ENCODE measurements at regions of chr9 and their contacts with region 1.

Region 1: DNA sequence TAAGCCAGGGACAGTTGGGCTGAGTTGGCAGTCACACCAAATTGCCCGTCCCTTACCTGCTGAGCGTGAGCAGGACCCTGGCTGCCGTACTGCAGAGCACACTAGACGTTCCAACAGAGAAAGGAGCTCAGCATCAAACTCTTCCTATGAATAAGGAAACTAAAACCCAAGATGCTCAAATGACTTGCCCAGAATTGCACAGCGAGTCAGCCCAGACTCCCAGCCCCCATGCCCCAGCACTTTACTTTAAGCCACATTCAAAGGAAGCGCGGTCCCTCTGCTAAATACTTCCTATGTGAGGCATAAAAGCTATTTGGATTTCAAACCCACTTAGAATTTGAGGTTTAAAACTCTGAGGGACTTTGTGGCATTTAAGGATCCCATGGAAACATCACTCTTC is 23.9 kb downstream of the PAX5 start:
- DNase-seq: no peak
- ATAC-seq: no peak
- H3K4me3 ChIP-seq: no peak overlapping the region
- H3K27ac ChIP-seq: no peak overlapping the region
- H3K4me1 ChIP-seq: no peaks in the 10 kb centered on the region
- H3K27me3 ChIP-seq: peaks cover 79% of the 10 kb centered on the region
- CTCF ChIP-seq: no peak
- POLR2A ChIP-seq: no peak
- RAD21 ChIP-seq: no peak

Region 2: GRCh38 chr9:36392489-36392888 is 617.7 kb before region 1 on chr9:
- CTCF ChIA-PET with region 1: no interaction called
- POLR2A ChIA-PET with region 1: no interaction called
- RAD21 ChIA-PET with region 1: no interaction called
- intact Hi-C with region 1: no loop called
- DNase-seq: no peak
- ATAC-seq: no peak
- H3K4me3 ChIP-seq: no peak overlapping the region
- H3K27ac ChIP-seq: no peak overlapping the region
- H3K4me1 ChIP-seq: peaks cover 0 to 6% of the 10 kb centered on the region in 2 experiments; a peak in 2 of 4 replicates
- H3K27me3 ChIP-seq: no peaks in the 10 kb centered on the region
- CTCF ChIP-seq: no peak
- POLR2A ChIP-seq: no peak
- RAD21 ChIP-seq: no peak

Region 3: DNA sequence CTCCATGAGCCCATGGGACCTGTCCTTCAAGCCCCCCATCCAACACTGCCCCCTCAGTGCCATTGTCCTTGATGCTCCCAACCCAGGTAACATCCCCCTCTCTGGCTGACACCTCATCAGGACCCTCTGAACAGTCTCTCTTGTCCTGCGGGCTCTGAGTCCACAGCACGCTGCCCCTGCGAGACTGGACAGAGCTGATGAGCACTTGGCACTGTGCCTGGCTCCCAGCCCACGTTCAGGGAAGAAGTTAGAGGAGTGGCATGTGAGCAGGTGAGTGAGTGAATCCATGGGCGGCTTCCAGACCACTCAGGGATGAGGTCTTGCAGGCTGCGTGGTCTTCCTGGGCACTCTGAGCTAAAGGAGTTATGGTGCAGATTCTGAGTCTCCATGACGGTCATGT is 46.8 kb before region 1 on chr9:
- CTCF ChIA-PET with region 1: no interaction called
- POLR2A ChIA-PET with region 1: no interaction called
- RAD21 ChIA-PET with region 1: no interaction called
- intact Hi-C with region 1: no loop called
- DNase-seq: no peak
- ATAC-seq: no peak
- H3K4me3 ChIP-seq: no peak overlapping the region
- H3K27ac ChIP-seq: no peak overlapping the region
- H3K4me1 ChIP-seq: no peaks in the 10 kb centered on the region
- H3K27me3 ChIP-seq: no peaks in the 10 kb centered on the region
- CTCF ChIP-seq: no peak
- POLR2A ChIP-seq: no peak
- RAD21 ChIP-seq: no peak

Region 4: GRCh38 chr9:36974731-36975130 is 35.4 kb before region 1 on chr9:
- CTCF ChIA-PET with region 1: no interaction called
- POLR2A ChIA-PET with region 1: no interaction called
- RAD21 ChIA-PET with region 1: no interaction called
- intact Hi-C with region 1: loop called (anchors 2 kb)
- DNase-seq: no peak
- ATAC-seq: peak; percentile 60; the same call in 1 of the 2 replicates
- H3K4me3 ChIP-seq: no peak overlapping the region
- H3K27ac ChIP-seq: no peak overlapping the region
- H3K4me1 ChIP-seq: peaks cover 0 to 19% of the 10 kb centered on the region in 2 experiments; a peak in 3 of 4 replicates
- H3K27me3 ChIP-seq: no peaks in the 10 kb centered on the region
- CTCF ChIP-seq: peak; percentile 31 to 41 (median 33); a peak in 3 of 6 replicates
- POLR2A ChIP-seq: no peak
- RAD21 ChIP-seq: peak; percentile 52